Heart left ventricle (tissue), 16 donors: ENCODE measurements at regions of chr18 and their contacts with region 1.

Region 1: DNA sequence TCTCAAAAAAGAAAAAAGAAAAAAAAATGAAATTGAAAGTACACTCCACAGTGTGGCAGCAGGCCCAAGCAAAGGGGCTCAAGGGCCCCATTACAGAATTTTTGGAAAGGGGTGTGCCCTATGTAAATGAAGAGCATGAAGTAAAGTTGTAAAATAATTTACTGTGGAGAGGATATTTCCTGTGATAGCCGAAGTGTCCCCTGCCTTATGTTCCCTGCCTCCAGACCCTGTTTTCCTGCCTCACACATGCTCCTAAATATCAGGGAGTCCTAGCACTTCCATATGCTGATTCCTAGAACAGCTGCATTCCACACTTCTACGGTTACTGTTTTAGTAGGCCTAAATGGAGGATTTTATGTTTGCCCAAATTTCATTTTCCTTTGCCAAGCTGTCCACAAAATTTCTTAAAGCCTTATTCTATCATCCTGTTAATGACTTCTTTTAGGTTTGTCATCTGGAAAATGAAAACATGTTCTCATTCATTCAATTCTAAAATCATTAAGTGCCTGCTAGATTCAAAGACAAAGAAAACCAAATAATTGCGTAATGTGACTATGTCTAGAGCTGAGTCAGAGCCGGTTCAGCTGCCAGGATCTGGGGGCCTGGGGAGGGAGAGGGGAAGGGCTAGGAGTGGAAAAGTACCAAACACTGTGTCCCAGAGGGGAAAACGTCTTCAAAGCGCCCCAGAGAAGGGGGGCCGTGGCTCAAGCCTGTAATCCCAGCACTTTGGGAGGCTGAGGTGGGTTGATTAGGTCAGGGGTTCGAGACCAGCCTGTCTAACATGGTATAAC is 25.9 kb upstream of the IMPA2 start:
- DNase-seq: peak in 2 of 5 donors; percentile 68 to 76
- ATAC-seq: peak in 1 of 4 donors; percentile 83
- H3K4me3 ChIP-seq: no peak overlapping the region
- H3K27ac ChIP-seq: peak overlapping the region in 2 of 12 donors; percentile 60 to 85
- H3K4me1 ChIP-seq: peaks cover 0 to 12% (median 0%) of the 10 kb centered on the region in 12 donors
- H3K27me3 ChIP-seq: no peaks in the 10 kb centered on the region
- CTCF ChIP-seq: no peak
- POLR2A ChIP-seq: no peak

Region 2: GRCh38 chr18:11972371-11973174 is 17.1 kb after region 1 on chr18:
- intact Hi-C with region 1: loop called in 1 of 10 experiments (anchors 2 kb)
- DNase-seq: no peak
- ATAC-seq: no peak
- H3K4me3 ChIP-seq: no peak overlapping the region
- H3K27ac ChIP-seq: no peak overlapping the region
- H3K4me1 ChIP-seq: peaks cover 0 to 5% (median 0%) of the 10 kb centered on the region in 12 donors
- H3K27me3 ChIP-seq: no peaks in the 10 kb centered on the region
- CTCF ChIP-seq: no peak
- POLR2A ChIP-seq: no peak